ENCODE measurements at regions of chr3 and their contacts with region 1.

Region 1: DNA sequence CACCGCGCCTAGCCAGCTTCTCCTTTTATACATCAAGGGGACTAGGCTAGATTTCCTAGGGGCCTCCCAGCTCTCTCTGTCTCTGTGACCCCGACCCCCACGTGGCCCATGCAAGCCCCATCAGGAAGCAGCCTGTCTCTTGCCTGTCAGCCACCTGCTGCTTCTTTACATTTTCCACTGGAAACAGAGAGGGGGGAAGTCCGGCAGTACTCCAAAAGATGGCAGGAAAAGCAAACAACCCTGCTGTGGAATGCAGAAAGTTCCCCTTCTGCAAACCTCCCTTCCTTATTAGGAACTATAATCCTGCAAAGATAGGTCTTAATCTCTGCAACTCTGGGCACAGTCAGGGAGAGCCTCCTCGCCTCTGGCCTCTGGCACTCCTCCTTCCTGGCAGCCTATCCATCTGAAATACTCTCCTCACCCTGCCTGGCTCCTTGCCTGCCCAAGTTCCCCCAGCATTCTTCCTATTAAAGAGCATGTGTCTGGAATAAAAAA is 47.4 kb upstream of the HACD2 start:
- DNase-seq: no peak
- ATAC-seq: no peak
- H3K4me3 ChIP-seq: no peak overlapping the region
- H3K4me3 Mint-ChIP-seq: no peak overlapping the region
- H3K27ac ChIP-seq: no peak overlapping the region
- H3K27ac Mint-ChIP-seq: no peak overlapping the region
- H3K4me1 ChIP-seq: no peaks in the 10 kb centered on the region
- H3K4me1 Mint-ChIP-seq: no peaks in the 10 kb centered on the region
- H3K27me3 ChIP-seq: peaks cover 0 to 16% of the 10 kb centered on the region in 2 experiments
- H3K27me3 Mint-ChIP-seq: peaks cover 5 to 6% of the 10 kb centered on the region in 2 donors

Region 2: GRCh38 chr3:123618768-123619484 is 13.3 kb before region 1 on chr3:
- CTCF ChIA-PET with region 1: no interaction called
- POLR2A ChIA-PET with region 1: no interaction called
- DNase-seq: peak in 3 of 35 experiments; percentile 4 to 46 (median 7)
- ATAC-seq: no peak
- H3K4me3 ChIP-seq: no peak overlapping the region
- H3K4me3 Mint-ChIP-seq: no peak overlapping the region
- H3K27ac ChIP-seq: no peak overlapping the region
- H3K27ac Mint-ChIP-seq: no peak overlapping the region
- H3K4me1 ChIP-seq: no peaks in the 10 kb centered on the region
- H3K4me1 Mint-ChIP-seq: peaks cover 0 to 1% (median 0%) of the 10 kb centered on the region in 3 donors
- H3K27me3 ChIP-seq: no peaks in the 10 kb centered on the region
- H3K27me3 Mint-ChIP-seq: no peaks in the 10 kb centered on the region

Region 3: DNA sequence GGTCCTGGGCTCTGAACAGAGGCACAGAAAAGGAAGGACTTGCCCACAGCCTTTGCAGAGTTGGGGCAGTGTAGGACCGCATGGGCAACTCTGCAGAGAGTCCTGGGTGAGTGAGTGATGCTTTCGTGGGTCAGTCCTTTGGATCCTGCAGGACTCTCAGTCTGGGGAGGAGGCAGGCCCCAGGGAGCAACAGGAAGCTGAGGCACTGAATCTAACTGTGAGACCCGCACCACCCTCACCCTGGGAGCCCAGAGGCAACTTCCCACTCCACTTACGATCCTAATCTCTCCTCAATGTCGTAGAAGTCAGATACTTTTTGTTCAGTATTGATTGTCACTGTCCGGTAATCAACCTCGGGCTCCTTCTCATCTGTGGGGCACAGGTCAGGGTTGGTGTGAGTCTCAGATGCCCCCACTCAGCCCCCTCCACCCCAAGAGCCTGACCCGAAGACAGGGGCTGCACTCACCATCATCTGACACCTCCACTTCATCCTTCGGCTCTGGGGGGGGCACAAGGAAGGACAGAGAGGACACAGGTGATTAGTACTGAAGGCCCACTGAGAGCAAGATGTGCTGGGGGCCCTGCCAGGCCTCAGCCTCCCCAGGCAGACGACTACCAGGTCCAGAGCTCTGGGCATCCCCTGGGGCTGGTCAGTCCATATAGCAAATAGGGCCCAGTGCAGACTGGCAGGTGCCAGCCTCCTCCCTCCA is 16.6 kb after region 1 on chr3:
- CTCF ChIA-PET with region 1: no interaction called
- POLR2A ChIA-PET with region 1: no interaction called
- DNase-seq: no peak
- ATAC-seq: no peak
- H3K4me3 ChIP-seq: no peak overlapping the region
- H3K4me3 Mint-ChIP-seq: no peak overlapping the region
- H3K27ac ChIP-seq: no peak overlapping the region
- H3K27ac Mint-ChIP-seq: no peak overlapping the region
- H3K4me1 ChIP-seq: no peaks in the 10 kb centered on the region
- H3K4me1 Mint-ChIP-seq: no peaks in the 10 kb centered on the region
- H3K27me3 ChIP-seq: peaks cover 0 to 11% of the 10 kb centered on the region in 2 experiments
- H3K27me3 Mint-ChIP-seq: peaks cover 0 to 2% of the 10 kb centered on the region in 2 donors

Region 4: DNA sequence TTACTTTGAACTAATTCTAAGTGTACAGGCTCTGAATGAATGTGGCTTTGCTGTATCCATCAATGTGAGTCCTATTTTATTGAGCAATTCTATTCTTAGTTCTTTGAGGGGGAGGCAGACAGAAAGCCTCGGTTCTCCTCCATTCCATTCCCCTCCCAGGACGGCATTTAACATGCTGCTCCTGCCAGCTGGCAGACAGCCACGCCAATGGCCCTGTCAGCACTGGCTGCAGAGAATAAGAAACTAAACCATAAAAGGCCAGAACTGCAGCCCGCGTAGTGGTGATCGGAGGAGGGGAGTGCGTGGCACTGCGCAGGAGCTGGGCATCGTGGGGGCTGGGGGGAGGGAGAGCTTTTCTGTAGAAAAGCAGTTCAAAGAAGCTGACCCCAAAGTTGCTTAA is 28.7 kb after region 1 on chr3:
- CTCF ChIA-PET with region 1: no interaction called
- POLR2A ChIA-PET with region 1: no interaction called
- DNase-seq: no peak
- ATAC-seq: no peak
- H3K4me3 ChIP-seq: no peak overlapping the region
- H3K4me3 Mint-ChIP-seq: no peak overlapping the region
- H3K27ac ChIP-seq: no peak overlapping the region
- H3K27ac Mint-ChIP-seq: no peak overlapping the region
- H3K4me1 ChIP-seq: no peaks in the 10 kb centered on the region
- H3K4me1 Mint-ChIP-seq: no peaks in the 10 kb centered on the region
- H3K27me3 ChIP-seq: peaks cover 0 to 16% of the 10 kb centered on the region in 2 experiments
- H3K27me3 Mint-ChIP-seq: peaks cover 8 to 21% of the 10 kb centered on the region in 2 donors

Region 5: GRCh38 chr3:123712077-123712860 is 80.1 kb after region 1 on chr3:
- CTCF ChIA-PET with region 1: no interaction called
- POLR2A ChIA-PET with region 1: no interaction called
- DNase-seq: no peak
- ATAC-seq: no peak
- H3K4me3 ChIP-seq: no peak overlapping the region
- H3K4me3 Mint-ChIP-seq: no peak overlapping the region
- H3K27ac ChIP-seq: no peak overlapping the region
- H3K27ac Mint-ChIP-seq: no peak overlapping the region
- H3K4me1 ChIP-seq: no peaks in the 10 kb centered on the region
- H3K4me1 Mint-ChIP-seq: no peaks in the 10 kb centered on the region
- H3K27me3 ChIP-seq: peaks cover 0 to 9% of the 10 kb centered on the region in 2 experiments
- H3K27me3 Mint-ChIP-seq: peaks cover 0 to 5% of the 10 kb centered on the region in 2 donors

Region 6: DNA sequence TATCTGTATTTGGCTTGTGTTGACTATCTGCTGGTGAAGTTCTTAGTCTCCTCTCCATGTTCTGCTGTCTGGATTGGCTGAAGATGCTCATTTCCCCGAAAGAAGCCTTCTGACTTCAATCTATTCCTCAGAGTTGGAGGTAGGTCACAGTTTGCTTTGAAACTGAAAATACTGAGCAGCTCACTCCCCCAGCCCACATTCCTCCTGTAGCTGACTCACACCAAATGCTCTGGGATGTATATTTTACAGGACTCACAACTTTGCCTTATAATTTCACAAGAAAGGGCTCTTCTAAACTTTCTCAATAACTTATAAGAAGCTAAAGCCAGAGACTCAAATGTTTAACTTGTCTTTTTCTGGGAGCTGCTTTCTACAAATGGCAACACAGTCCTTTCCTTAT is 1924.1 kb after region 1 on chr3:
- CTCF ChIA-PET with region 1: no interaction called
- POLR2A ChIA-PET with region 1: interaction called in 1 of 2 experiments, 10 read pairs
- DNase-seq: no peak
- ATAC-seq: no peak
- H3K4me3 ChIP-seq: no peak overlapping the region
- H3K4me3 Mint-ChIP-seq: no peak overlapping the region
- H3K27ac ChIP-seq: no peak overlapping the region
- H3K27ac Mint-ChIP-seq: no peak overlapping the region
- H3K4me1 ChIP-seq: no peaks in the 10 kb centered on the region
- H3K4me1 Mint-ChIP-seq: no peaks in the 10 kb centered on the region
- H3K27me3 ChIP-seq: no peaks in the 10 kb centered on the region
- H3K27me3 Mint-ChIP-seq: no peaks in the 10 kb centered on the region

Measured in T-cell (primary cell).